ENCODE measurements at regions of chr17 and their contacts with region 1.

Region 1: GRCh38 chr17:74770498-74771318 is 5.4 kb downstream of the NAT9 start:
- DNase-seq: peak; percentile 91
- H3K4me3 Mint-ChIP-seq: no peak overlapping the region
- H3K27ac Mint-ChIP-seq: peak overlapping the region; percentile 67
- H3K4me1 Mint-ChIP-seq: peaks cover 37% of the 10 kb centered on the region
- H3K27me3 Mint-ChIP-seq: no peaks in the 10 kb centered on the region
- CTCF ChIP-seq: peak; percentile 82

Region 2: DNA sequence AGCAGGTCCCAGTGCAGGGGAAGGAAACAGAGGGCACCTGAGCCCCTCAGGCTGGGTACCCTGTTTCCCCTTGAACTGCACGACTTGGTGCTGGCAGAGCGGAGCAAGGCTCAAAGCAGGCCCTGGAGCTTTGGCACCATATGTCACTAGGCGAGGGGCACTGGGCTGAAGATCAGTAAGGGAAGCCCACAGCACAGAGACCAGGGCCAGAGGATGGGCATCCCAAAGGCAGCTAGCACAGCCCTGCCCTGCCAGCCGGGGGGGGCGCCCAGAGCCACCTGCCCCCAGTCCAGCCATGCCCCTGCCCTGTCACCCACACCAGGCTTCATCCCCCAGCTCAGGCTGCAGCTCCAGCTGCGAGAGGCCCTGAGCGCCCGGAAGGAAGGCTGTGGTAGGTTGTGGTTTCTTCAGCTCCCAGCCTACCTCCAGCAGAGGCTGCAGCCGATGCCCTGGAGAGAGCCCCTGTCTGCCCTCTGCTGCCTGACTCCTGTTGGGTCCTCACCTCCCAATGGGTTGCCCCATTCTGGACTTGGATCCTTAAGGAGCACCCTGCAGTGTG is 11.4 kb before region 1 on chr17:
- CTCF ChIA-PET with region 1: interaction called, 30 read pairs
- intact Hi-C with region 1: no loop called
- DNase-seq: peak; percentile 55
- H3K4me3 Mint-ChIP-seq: peak overlapping the region; percentile 65
- H3K27ac Mint-ChIP-seq: peak overlapping the region; percentile 68
- H3K4me1 Mint-ChIP-seq: peaks cover 50% of the 10 kb centered on the region
- H3K27me3 Mint-ChIP-seq: no peaks in the 10 kb centered on the region
- CTCF ChIP-seq: peak; percentile 25

Measured in Calu3 (cell line).